Ascending aorta (tissue), 2 donors: ENCODE measurements at regions of chrX and their contacts with region 1.

Region 1: DNA sequence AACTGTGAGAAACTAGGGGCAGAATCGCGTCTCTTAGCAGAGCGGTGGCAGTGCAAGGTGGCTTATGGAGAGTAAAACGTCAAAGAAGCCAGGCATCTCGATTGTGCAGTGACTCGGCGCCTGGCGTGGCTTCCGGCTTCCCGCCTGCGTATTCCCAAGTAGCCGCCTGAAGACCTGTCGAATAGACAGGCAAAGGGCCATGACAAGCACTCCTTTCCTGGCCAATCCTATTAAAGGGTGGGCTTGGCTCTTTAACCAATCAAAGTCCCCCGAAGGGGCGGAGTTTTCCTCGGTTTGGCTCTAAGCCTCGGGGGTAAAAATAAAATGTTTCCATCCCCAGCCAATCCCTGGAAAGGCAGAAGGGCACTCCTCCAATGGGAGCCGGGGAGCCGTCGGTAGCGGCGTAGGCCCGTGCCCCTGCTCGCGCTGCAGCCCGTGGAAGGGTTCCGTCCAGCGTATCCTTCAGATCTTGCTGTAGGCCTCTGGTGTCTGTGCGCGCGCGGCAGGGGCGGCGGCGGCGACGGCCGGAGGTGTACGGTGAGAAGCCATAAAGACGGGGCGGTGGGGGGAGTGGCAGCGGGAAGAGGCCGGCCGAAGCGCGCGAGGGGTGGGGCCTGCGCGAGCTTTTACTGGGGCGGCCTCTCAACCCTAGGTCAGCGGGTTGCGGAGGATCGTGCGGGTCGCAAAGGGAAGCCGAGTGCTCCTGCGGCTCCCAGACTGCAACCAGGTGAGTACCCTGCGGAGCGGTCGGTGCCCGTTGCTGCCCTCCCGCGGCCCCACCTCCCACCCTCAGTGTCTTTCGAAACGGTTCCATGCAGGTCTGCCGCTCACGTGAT is at the start of gene KANTR:
- DNase-seq: peak; percentile 74 to 93
- H3K4me3 ChIP-seq: peak within 1 kb of the TSS; percentile 58 to 73
- H3K27ac ChIP-seq: peak within 1 kb of the TSS; percentile 80 to 81
- H3K4me1 ChIP-seq: no peaks in the 10 kb centered on the region
- H3K27me3 ChIP-seq: peaks cover 3% of the 10 kb centered on the region
- CTCF ChIP-seq: no peak
- total RNA-seq, gene KANTR: 5.0 TPM

Region 2: GRCh38 chrX:51892921-51893745 is 1200.8 kb before region 1 on chrX and contains the start of gene MAGED1:
- intact Hi-C with region 1: loop called (anchors 10 kb)
- DNase-seq: peak; percentile 83 to 95
- H3K4me3 ChIP-seq: peak within 1 kb of the TSS; percentile 56 to 73
- H3K27ac ChIP-seq: peak within 1 kb of the TSS; percentile 76 to 85
- H3K4me1 ChIP-seq: peaks cover 0 to 3% of the 10 kb centered on the region in 2 donors
- H3K27me3 ChIP-seq: no peaks in the 10 kb centered on the region
- CTCF ChIP-seq: no peak
- total RNA-seq, gene MAGED1: 74.5 TPM

Region 3: DNA sequence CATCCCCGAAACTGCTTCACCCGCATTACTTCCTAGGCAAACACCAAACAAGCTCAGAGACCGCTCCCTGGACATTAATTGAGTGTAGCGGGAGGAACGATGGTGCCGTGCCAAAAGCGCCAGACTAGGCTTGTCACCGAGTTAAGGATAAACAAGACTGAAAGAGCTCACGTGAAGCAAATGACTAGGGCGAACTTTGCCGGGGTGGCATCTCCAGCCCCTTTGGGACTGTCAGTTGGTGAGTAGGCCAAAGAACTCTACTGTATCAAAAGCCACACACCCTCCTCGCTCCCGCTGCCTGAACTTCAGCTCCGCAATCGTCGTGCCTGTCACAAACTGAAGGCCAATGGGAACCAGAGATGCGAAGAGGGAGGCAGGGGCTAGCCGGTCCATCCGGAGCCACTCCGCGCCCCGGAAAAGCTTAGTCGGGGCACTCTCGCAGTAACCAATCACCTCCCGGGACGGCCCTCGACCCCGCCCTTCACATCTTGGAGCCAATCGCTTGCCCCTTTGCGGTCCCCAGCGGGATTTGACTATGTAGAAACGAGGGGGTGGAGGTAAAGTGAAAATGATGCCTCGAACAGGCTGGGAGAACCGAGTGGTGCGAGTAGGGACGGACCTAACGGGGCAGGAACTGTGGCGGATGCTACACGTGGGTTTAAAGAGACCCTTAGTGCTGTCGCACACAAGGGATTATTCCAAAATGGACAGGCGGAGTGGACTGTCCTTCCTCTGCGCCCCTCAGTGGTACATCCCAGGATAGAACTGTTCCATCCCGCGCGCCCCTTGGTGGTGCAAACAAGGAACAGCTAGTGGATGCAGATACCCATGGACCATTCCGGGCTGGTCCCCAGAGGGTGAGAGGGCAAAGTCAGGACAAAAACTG is 98.6 kb before region 1 on chrX:
- intact Hi-C with region 1: loop called (anchors 5 kb)
- DNase-seq: peak; percentile 83 to 96
- H3K4me3 ChIP-seq: peak overlapping the region; percentile 52 to 69
- H3K27ac ChIP-seq: peak overlapping the region; percentile 79 to 81
- H3K4me1 ChIP-seq: peaks cover 0 to 2% of the 10 kb centered on the region in 2 donors
- H3K27me3 ChIP-seq: no peaks in the 10 kb centered on the region
- CTCF ChIP-seq: peak; percentile 47 to 67 (median 62)

Region 4: DNA sequence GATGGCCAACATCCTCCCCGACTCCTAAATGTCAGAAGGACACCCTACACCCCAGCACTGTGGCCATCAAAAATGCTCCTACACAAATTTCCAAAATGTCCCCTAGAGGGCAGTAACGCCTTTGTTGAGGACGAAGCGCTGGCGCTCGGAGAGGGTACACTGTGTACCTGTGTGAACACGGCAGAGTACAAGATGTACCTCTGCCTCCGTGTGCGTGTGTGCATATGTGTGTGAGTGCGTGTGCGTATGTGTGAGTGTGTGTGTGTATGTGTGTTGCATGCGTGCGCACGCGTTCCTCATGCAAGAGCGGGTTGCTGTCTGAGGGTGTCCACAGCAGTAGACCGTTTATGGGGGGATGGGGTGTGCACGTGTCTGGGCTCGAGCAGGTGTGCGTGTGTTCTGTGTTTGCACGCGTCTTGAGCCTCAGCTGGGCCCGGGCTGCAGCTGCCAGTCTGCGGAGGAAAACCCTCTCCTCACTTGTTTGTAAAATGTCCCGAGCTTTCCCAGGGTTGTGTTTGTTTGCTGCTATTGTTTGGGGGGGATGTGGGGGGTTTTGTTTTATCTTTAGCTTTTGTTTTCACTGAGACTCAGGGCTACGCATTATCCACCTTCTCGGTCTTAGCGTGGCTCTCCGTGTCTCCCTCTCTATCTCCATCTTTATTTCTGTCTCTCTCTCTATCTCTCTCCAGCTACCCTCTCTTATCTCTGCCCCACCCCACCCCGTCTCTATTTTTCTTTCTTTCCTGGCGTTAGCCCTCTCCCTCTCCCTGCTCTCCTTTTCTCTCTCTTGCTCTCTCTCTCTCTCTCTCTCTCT is 22.2 kb before region 1 on chrX:
- intact Hi-C with region 1: loop called (anchors 1 kb)
- DNase-seq: peak; percentile 64 to 89
- H3K4me3 ChIP-seq: peak overlapping the region; percentile 31 to 60
- H3K27ac ChIP-seq: peak overlapping the region; percentile 66 to 73
- H3K4me1 ChIP-seq: no peaks in the 10 kb centered on the region
- H3K27me3 ChIP-seq: no peaks in the 10 kb centered on the region
- CTCF ChIP-seq: peak; percentile 61 to 71 (median 63)

Region 5: GRCh38 chrX:53224860-53225797 is 131.2 kb after region 1 on chrX and contains the start of gene KDM5C:
- intact Hi-C with region 1: loop called (anchors 10 kb)
- DNase-seq: peak; percentile 64 to 96
- H3K4me3 ChIP-seq: peak within 1 kb of the TSS; percentile 84 to 89
- H3K27ac ChIP-seq: peak within 1 kb of the TSS; percentile 84 to 86
- H3K4me1 ChIP-seq: peaks cover 15 to 26% of the 10 kb centered on the region in 2 donors
- H3K27me3 ChIP-seq: no peaks in the 10 kb centered on the region
- CTCF ChIP-seq: no peak
- total RNA-seq, gene KDM5C: 71.7 TPM

Region 6: GRCh38 chrX:53239474-53239873 is 145.5 kb after region 1 on chrX:
- intact Hi-C with region 1: no loop called
- DNase-seq: no peak
- H3K4me3 ChIP-seq: no peak overlapping the region
- H3K27ac ChIP-seq: no peak overlapping the region
- H3K4me1 ChIP-seq: no peaks in the 10 kb centered on the region
- H3K27me3 ChIP-seq: no peaks in the 10 kb centered on the region
- CTCF ChIP-seq: no peak

Region 7: GRCh38 chrX:53262918-53263394 is 169.0 kb after region 1 on chrX:
- intact Hi-C with region 1: no loop called
- DNase-seq: no peak
- H3K4me3 ChIP-seq: no peak overlapping the region
- H3K27ac ChIP-seq: no peak overlapping the region
- H3K4me1 ChIP-seq: no peaks in the 10 kb centered on the region
- H3K27me3 ChIP-seq: no peaks in the 10 kb centered on the region
- CTCF ChIP-seq: no peak

Region 8: DNA sequence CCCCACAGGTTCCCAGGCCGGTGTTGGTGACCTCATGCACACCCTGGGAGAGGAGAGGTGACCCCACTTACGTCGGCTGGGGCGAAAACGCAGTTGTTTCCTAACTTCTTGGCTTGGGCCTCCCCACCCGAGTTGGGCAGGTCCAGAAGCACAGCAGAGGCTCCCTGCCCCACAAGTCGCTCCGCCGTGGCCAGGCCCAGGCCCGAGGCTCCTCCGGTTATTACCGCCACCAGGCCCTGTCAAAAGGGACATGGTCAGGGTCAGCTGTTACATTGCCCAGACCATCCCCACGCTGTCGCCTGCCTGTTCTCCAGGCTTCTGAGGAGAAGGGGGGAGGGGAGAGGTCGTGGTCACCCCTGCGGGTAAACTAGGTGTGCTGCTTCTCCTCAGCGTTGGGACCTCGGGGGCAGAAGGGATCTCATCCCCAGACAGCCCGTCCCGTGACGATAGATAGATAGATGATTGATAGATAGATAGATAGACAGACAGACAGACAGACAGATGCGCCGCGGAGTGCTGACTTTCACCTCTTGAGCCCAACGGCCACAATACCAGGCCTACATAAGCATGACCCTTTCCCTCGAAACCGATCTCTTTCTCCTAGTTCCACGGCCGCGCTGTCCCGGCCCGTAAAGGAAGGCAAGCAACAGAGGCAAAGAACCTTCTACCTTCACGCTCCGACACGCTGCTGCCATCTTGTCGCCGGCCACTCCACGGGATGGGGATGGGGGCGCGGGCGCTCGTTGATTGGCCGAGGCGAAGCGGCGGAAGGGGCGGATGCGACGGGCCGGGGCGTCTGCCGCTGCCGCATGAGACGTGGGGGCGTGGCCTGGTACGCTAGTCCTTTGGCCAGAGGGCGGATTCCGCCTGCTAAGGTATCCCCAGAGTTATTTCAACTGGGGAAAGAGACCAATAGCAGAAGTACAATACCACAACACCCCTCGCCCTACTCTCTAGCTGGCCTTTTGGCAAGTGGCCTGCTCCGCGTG is 340.0 kb after region 1 on chrX and contains the start of gene HSD17B10:
- intact Hi-C with region 1: loop called (anchors 5 kb)
- DNase-seq: peak; percentile 49 to 92
- H3K4me3 ChIP-seq: peak within 1 kb of the TSS; percentile 47 to 72
- H3K27ac ChIP-seq: peak within 1 kb of the TSS; percentile 69 to 83
- H3K4me1 ChIP-seq: no peaks in the 10 kb centered on the region
- H3K27me3 ChIP-seq: no peaks in the 10 kb centered on the region
- CTCF ChIP-seq: no peak
- total RNA-seq, gene HSD17B10: 21.5 TPM